CD4-positive, alpha-beta memory T cell (primary cell): ENCODE measurements at regions of chr22 and their contacts with region 1.

Region 1: DNA sequence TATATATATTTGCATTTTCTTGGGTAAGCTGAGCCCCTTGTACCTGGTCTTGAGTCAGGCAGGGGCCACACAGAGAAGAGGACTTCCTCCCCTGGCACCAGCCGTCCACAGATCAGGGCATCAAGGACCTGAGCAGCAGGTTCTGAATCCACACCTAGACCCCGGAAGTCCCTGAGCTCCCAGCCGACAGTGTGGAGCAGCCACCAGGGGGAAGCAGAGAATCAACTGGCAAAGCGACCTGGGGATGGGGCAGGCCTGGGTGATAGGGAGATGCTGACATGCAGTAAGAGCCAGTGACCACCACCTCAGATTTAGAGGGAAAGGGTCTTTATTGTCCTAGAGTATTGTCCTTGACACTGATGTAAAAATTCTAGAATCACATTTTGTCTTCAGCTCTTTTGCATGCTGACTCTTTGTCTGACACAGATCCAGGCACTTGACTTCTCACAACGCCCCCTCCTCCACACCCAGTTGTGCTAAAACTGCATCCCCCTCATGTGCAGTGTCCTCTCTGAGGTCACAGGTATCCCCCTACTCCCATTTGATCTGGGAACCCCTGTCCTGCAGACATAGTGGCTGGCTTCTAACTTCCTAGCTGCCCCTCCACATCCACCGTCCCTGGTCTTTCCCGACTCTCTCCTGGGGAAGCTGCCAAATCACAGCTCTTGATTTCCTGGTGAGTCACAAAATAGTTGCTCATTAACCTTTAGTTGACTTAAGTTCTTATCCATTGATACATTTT is 109.3 kb downstream of the GGTLC2 start:
- DNase-seq: peak; percentile 73 to 81 (median 77)
- H3K4me3 ChIP-seq: no peak overlapping the region
- H3K4me3 Mint-ChIP-seq: peak overlapping the region in 7 of 8 donors; percentile 50 to 89 (median 81)
- H3K27ac ChIP-seq: peak overlapping the region; percentile 30
- H3K27ac Mint-ChIP-seq: peak overlapping the region; percentile 80 to 94 (median 87)
- H3K4me1 ChIP-seq: peaks cover 47% of the 10 kb centered on the region
- H3K4me1 Mint-ChIP-seq: peaks cover 40 to 63% (median 52%) of the 10 kb centered on the region in 4 donors
- H3K27me3 ChIP-seq: no peaks in the 10 kb centered on the region
- H3K27me3 Mint-ChIP-seq: no peaks in the 10 kb centered on the region

Region 2: GRCh38 chr22:22168190-22168940 is 585.3 kb before region 1 on chr22:
- CTCF ChIA-PET with region 1: no interaction called
- POLR2A ChIA-PET with region 1: no interaction called
- intact Hi-C with region 1: no loop called
- DNase-seq: peak in 3 of 5 donors; percentile 17 to 45 (median 33)
- H3K4me3 ChIP-seq: peak overlapping the region; percentile 8 to 29
- H3K4me3 Mint-ChIP-seq: peak overlapping the region; percentile 66 to 87 (median 80)
- H3K27ac ChIP-seq: no peak overlapping the region
- H3K27ac Mint-ChIP-seq: peak overlapping the region; percentile 46 to 87 (median 83)
- H3K4me1 ChIP-seq: peaks cover 11% of the 10 kb centered on the region
- H3K4me1 Mint-ChIP-seq: peaks cover 13 to 24% (median 14%) of the 10 kb centered on the region in 4 donors
- H3K27me3 ChIP-seq: no peaks in the 10 kb centered on the region
- H3K27me3 Mint-ChIP-seq: peaks cover 2 to 10% of the 10 kb centered on the region in 2 donors

Region 3: DNA sequence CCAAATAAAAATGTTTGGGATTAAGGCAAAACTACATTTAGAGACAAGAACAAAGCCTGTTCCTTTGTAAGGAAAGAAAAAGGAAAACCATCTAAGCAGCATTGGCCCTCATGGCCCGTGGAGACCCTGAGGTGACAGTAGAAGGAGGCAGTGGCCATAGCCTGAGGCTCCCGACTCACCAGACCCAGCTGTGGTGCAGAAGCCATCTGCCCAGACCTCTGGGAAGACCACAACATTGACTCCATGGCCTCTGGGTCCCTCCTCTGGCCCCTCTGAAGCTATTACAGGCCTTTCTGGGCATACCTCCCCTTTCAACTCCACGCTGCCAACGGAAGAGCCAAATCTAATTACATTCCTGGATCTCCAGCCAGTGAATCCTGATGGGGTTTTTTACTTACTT is 201.1 kb before region 1 on chr22:
- CTCF ChIA-PET with region 1: no interaction called
- POLR2A ChIA-PET with region 1: no interaction called
- intact Hi-C with region 1: no loop called
- DNase-seq: no peak
- H3K4me3 ChIP-seq: no peak overlapping the region
- H3K4me3 Mint-ChIP-seq: no peak overlapping the region
- H3K27ac ChIP-seq: no peak overlapping the region
- H3K27ac Mint-ChIP-seq: no peak overlapping the region
- H3K4me1 ChIP-seq: peaks cover 3% of the 10 kb centered on the region
- H3K4me1 Mint-ChIP-seq: no peaks in the 10 kb centered on the region
- H3K27me3 ChIP-seq: no peaks in the 10 kb centered on the region
- H3K27me3 Mint-ChIP-seq: no peaks in the 10 kb centered on the region

Region 4: GRCh38 chr22:22720201-22720723 is 33.4 kb before region 1 on chr22:
- CTCF ChIA-PET with region 1: interaction called, 16 read pairs
- POLR2A ChIA-PET with region 1: interaction called, 9 read pairs
- intact Hi-C with region 1: loop called (anchors 1 kb)
- DNase-seq: peak in 4 of 5 donors; percentile 25 to 46 (median 39)
- H3K4me3 ChIP-seq: no peak overlapping the region
- H3K4me3 Mint-ChIP-seq: no peak overlapping the region
- H3K27ac ChIP-seq: no peak overlapping the region
- H3K27ac Mint-ChIP-seq: peak overlapping the region in 6 of 7 donors; percentile 3 to 88 (median 56)
- H3K4me1 ChIP-seq: peaks cover 9% of the 10 kb centered on the region
- H3K4me1 Mint-ChIP-seq: peaks cover 15 to 33% (median 21%) of the 10 kb centered on the region in 4 donors
- H3K27me3 ChIP-seq: no peaks in the 10 kb centered on the region
- H3K27me3 Mint-ChIP-seq: no peaks in the 10 kb centered on the region

Region 5: DNA sequence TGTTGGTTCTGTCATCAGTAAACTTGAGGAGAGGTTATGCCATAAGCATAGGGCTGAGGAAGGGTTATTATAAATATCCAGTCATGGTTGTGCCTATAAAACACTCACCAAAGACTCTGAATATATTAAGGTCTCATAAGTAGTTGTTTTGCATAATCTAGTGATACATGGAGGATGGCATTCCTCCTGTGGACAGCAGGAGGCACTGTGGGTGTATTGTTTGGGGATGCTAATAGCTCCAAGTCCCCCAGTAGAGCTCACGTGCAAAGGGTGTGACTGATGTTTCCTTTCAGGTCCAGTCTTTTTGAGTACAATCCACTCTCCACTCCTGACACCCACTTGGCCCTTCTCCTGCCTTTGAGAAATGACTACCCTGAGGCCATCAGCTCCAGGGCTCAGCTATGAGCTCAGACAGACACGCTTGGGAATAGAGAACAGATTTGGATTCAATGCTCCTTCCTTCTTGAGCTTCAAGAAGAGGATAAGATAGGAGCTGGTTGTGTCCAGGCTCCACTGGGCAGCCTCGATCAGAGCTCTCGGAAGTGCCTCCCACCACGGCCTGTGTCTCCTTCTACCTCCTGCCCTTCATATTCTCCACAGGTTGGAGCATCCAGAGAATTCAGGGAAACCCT is 48.8 kb after region 1 on chr22:
- CTCF ChIA-PET with region 1: interaction called, 118 read pairs
- POLR2A ChIA-PET with region 1: interaction called, 6 read pairs
- intact Hi-C with region 1: loop called (anchors 2 kb)
- DNase-seq: peak in 2 of 5 donors; percentile 24 to 38
- H3K4me3 ChIP-seq: no peak overlapping the region
- H3K4me3 Mint-ChIP-seq: peak overlapping the region in 1 of 8 donors; percentile 31
- H3K27ac ChIP-seq: no peak overlapping the region
- H3K27ac Mint-ChIP-seq: peak overlapping the region in 1 of 7 donors; percentile 50
- H3K4me1 ChIP-seq: no peaks in the 10 kb centered on the region
- H3K4me1 Mint-ChIP-seq: peaks cover 12 to 40% (median 28%) of the 10 kb centered on the region in 4 donors
- H3K27me3 ChIP-seq: no peaks in the 10 kb centered on the region
- H3K27me3 Mint-ChIP-seq: no peaks in the 10 kb centered on the region

Region 6: DNA sequence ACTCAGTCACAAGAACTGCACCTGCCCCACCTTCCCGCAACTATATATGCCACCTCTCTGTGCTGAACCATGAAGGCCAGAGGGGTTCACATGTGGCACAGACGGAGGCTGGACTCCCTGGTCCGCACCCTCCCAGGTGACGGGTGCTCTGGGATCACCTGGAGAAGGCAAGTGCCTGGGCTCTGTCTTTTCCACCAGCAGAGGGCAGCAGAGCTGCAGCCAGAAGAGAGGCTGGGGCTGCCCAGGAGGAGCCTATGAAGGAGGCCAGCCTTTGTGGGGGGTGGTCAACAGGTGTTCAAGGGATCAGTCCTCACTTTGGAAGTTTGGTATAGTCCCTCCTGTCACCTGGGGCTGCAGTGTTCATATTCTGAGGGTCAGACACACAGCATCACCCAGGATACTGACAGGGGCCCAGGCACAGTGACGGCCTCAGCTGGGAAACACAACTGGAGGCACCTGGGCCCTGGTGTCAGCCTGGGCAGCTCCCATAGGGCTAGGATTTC is 94.7 kb after region 1 on chr22:
- CTCF ChIA-PET with region 1: interaction called, 48 read pairs
- POLR2A ChIA-PET with region 1: interaction called, 24 read pairs
- intact Hi-C with region 1: no loop called
- DNase-seq: peak; percentile 52 to 72 (median 57)
- H3K4me3 ChIP-seq: no peak overlapping the region
- H3K4me3 Mint-ChIP-seq: peak overlapping the region in 4 of 8 donors; percentile 32 to 49 (median 40)
- H3K27ac ChIP-seq: no peak overlapping the region
- H3K27ac Mint-ChIP-seq: peak overlapping the region in 5 of 7 donors; percentile 42 to 70 (median 61)
- H3K4me1 ChIP-seq: peaks cover 12% of the 10 kb centered on the region
- H3K4me1 Mint-ChIP-seq: peaks cover 31 to 55% (median 45%) of the 10 kb centered on the region in 4 donors
- H3K27me3 ChIP-seq: no peaks in the 10 kb centered on the region
- H3K27me3 Mint-ChIP-seq: peaks cover 0 to 1% of the 10 kb centered on the region in 2 donors

Region 7: DNA sequence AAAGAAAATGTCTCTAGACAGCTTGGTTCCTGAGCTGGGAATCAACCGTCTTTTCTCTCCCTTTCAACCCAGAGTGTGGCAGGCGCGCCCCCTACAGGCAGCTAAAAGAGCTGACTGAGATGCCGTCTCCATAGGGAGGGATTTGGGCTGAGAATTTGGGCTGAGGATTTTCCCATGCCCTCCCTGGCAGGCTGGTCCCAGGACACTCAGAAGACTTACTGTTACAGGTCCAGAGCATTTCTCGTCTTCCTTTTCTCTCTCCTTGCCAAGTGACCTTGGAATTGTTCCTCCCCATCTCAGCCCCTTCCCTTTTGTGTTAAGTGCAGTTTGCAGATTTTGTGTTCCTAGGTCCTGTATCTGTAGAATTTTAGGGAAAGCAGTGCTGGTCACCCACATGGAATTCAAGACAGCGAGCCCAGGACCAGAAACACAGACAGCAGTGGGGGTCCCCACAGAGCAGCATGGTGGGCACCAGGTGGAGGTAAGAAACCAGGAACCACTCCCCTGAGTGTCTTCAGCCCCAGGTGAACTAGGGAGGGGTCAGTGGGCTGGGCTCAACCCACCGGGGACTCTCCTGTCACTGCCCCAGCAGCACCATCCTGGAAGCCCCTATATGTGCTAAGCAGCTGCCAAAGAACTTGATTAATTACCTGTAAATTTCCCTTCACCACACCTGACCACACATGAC is 124.0 kb after region 1 on chr22:
- CTCF ChIA-PET with region 1: interaction called, 252 read pairs
- POLR2A ChIA-PET with region 1: interaction called, 12 read pairs
- intact Hi-C with region 1: loop called (anchors 1 kb)
- DNase-seq: peak; percentile 72 to 74 (median 73)
- H3K4me3 ChIP-seq: no peak overlapping the region
- H3K4me3 Mint-ChIP-seq: no peak overlapping the region
- H3K27ac ChIP-seq: no peak overlapping the region
- H3K27ac Mint-ChIP-seq: peak overlapping the region in 2 of 7 donors; percentile 42 to 76
- H3K4me1 ChIP-seq: no peaks in the 10 kb centered on the region
- H3K4me1 Mint-ChIP-seq: peaks cover 0 to 5% (median 2%) of the 10 kb centered on the region in 4 donors
- H3K27me3 ChIP-seq: no peaks in the 10 kb centered on the region
- H3K27me3 Mint-ChIP-seq: no peaks in the 10 kb centered on the region

Region 8: GRCh38 chr22:22894740-22895731 is 141.3 kb after region 1 on chr22:
- CTCF ChIA-PET with region 1: no interaction called
- POLR2A ChIA-PET with region 1: no interaction called
- intact Hi-C with region 1: no loop called
- DNase-seq: no peak
- H3K4me3 ChIP-seq: no peak overlapping the region
- H3K4me3 Mint-ChIP-seq: no peak overlapping the region
- H3K27ac ChIP-seq: no peak overlapping the region
- H3K27ac Mint-ChIP-seq: peak overlapping the region in 1 of 7 donors; percentile 73
- H3K4me1 ChIP-seq: no peaks in the 10 kb centered on the region
- H3K4me1 Mint-ChIP-seq: no peaks in the 10 kb centered on the region
- H3K27me3 ChIP-seq: no peaks in the 10 kb centered on the region
- H3K27me3 Mint-ChIP-seq: peaks cover 9 to 27% of the 10 kb centered on the region in 2 donors